ENCODE measurements at regions of chr1 and their contacts with region 1.

Region 1: DNA sequence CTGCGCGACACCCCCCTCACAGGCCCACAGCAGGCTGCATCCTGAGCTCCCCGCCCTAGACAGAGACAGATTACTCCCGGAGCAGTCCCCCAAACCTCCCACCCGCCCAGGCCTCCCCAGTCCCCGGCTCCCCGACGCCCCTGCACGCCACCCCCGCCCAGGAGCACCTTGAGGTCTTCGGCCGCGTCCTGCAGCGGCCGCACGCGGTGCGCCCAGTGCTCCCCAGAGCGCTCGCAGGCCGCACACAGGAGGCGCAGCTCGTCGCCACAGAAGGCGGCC is 709 bp downstream of the TRIM11 start:
- DNase-seq: no peak
- ATAC-seq: peak; percentile 2
- H3K4me3 Mint-ChIP-seq: peak overlapping the region; percentile 92
- H3K27ac Mint-ChIP-seq: peak overlapping the region; percentile 93
- H3K4me1 Mint-ChIP-seq: peaks cover 46% of the 10 kb centered on the region
- H3K27me3 Mint-ChIP-seq: no peaks in the 10 kb centered on the region

Region 2: DNA sequence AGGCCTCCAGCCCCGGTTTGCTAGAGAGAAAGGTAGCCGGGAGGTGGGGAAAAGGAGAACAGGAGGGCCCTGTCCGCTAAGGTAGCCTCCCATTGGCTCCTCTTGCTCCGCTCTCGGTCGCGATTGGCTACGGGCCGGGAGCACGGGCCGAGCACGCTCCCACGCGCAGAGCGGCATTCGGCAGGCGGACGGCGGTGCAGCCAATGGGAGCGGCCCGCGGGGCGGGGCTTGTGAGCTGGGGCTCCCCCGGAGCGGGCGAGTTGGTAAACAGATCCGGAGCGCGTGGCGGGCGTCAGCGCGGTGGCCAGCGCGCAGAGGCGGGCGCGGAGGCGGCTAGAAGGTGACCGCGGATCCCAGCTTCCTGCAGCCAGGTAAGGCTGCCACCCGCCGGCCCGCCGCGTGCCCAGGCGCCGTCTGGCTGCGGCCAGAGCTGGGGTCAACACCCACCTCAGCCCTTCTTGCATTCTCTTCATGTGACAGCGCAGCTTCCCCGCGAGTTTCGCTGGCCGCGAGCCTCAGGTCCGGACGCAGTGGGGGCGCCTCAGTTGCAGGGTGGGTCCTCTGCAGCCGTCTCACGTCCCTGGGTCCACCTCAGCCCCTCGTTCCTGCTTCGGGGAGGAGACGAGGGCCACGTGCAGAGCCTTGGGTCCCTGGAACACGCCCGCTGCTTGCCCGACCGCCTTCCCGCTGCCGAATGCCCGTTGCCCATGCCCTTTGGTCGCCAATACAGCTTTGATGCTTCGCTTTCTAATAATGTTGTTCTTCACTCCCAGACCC is 1465.7 kb before region 1 on chr1 and contains the start of gene COQ8A:
- CTCF ChIA-PET with region 1: no interaction called
- POLR2A ChIA-PET with region 1: no interaction called
- intact Hi-C with region 1: loop called in 1 of 2 experiments (anchors 10 kb)
- DNase-seq: peak; percentile 100
- ATAC-seq: peak; percentile 97
- H3K4me3 Mint-ChIP-seq: peak within 1 kb of the TSS; percentile 82
- H3K27ac Mint-ChIP-seq: peak within 1 kb of the TSS; percentile 96
- H3K4me1 Mint-ChIP-seq: peaks cover 53% of the 10 kb centered on the region
- H3K27me3 Mint-ChIP-seq: no peaks in the 10 kb centered on the region
- total RNA-seq, gene COQ8A: 21.3 to 26.9 TPM

Region 3: DNA sequence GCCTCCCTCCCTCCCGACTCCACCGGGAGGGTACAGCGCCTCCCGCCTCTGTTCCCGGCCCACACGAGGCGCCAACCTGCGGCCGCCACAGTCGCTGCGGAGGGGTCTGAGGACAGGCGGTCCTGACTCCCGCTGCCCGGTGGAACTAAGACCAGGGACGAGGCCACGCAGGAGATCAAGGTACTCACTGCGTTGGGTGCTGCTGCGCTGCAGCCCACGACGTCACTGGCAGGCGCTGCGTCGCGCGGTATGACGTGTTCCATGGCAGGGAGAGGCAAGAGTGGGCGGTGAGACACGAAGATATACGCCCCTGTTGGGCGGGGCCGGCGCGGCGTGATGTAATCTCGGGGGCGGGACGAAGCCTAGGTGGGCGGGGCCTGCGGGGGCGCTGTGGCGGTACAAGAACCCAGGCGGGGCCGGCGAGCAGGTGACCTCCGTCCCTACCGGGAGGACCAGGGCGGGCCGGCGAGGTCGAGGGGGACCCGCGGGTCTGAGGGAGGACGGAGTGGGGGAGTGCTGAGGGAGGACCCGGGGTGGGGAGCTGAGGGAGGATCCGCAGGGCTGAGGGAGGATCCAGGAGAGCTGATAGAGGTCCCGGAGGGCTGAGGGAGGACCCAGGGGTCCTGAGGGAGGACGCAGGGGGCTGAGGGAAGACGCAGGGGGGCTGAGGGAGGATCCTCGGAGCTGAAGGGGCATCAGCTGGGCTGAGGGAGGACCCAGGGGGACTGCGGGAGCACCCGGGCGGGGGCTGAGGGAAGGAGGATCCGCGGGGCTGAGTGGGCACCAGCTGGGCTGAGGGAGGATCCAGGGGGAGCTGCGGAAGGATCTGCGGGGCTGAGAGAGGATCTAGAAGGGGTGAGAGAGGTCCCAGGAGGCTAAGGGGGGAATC is 296.6 kb before region 1 on chr1 and contains the start of gene MRPL55:
- CTCF ChIA-PET with region 1: no interaction called
- POLR2A ChIA-PET with region 1: no interaction called
- intact Hi-C with region 1: loop called in 1 of 2 experiments (anchors 1 kb)
- DNase-seq: peak; percentile 99
- ATAC-seq: peak; percentile 92
- H3K4me3 Mint-ChIP-seq: peak within 1 kb of the TSS; percentile 90
- H3K27ac Mint-ChIP-seq: peak within 1 kb of the TSS; percentile 92
- H3K4me1 Mint-ChIP-seq: peaks cover 21% of the 10 kb centered on the region
- H3K27me3 Mint-ChIP-seq: no peaks in the 10 kb centered on the region
- total RNA-seq, gene MRPL55: 51.0 to 57.7 TPM

Region 4: GRCh38 chr1:228174482-228175375 is 231.2 kb before region 1 on chr1:
- CTCF ChIA-PET with region 1: no interaction called
- POLR2A ChIA-PET with region 1: no interaction called
- intact Hi-C with region 1: loop called in 1 of 2 experiments (anchors 2 kb)
- DNase-seq: peak; percentile 59
- ATAC-seq: peak; percentile 67
- H3K4me3 Mint-ChIP-seq: no peak overlapping the region
- H3K27ac Mint-ChIP-seq: no peak overlapping the region
- H3K4me1 Mint-ChIP-seq: no peaks in the 10 kb centered on the region
- H3K27me3 Mint-ChIP-seq: no peaks in the 10 kb centered on the region

Region 5: GRCh38 chr1:228336308-228337090 is 69.4 kb before region 1 on chr1:
- CTCF ChIA-PET with region 1: no interaction called
- POLR2A ChIA-PET with region 1: no interaction called
- intact Hi-C with region 1: no loop called
- DNase-seq: no peak
- ATAC-seq: no peak
- H3K4me3 Mint-ChIP-seq: no peak overlapping the region
- H3K27ac Mint-ChIP-seq: no peak overlapping the region
- H3K4me1 Mint-ChIP-seq: no peaks in the 10 kb centered on the region
- H3K27me3 Mint-ChIP-seq: no peaks in the 10 kb centered on the region

Region 6: DNA sequence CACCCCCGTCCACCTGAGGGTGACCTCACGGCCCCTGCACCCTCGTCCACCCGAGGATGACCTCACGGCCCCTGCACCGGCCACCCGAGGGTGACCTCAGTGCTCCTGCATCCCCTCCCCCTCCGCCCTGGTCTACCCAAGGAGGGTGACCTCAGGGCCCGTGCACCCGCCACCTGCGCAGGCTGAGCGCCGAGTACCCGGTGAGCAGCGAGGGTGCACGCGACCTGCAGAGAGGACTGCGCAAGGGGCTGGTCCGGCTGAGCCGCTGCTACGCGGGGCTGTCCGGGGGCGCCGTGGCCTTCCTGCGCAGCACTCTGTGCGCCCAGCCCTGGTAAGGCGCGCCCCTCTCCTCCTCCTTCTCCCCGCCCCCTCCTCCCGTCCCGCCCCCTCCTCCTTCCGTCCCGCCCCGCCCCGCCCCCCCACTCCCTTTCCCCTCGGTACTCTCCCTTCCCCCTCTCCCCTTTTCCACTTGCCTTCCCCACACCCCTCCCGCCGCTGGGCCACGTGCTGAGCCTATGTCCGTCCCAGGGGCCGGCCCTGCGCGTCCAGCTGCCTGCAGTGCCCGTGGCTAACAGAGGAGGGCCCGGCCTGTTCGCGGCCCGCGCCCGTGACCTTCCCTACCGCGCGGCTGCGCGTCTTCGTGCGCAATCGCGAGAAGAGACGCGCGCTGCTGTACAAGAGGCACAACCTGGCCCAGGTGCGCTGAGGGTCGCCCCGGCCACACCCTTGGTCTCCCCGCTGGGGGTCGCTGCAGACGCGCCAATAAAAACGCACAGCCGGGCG is 27.6 kb before region 1 on chr1:
- CTCF ChIA-PET with region 1: no interaction called
- POLR2A ChIA-PET with region 1: no interaction called
- intact Hi-C with region 1: loop called in 1 of 2 experiments (anchors 2 kb)
- DNase-seq: peak; percentile 84
- ATAC-seq: peak; percentile 77
- H3K4me3 Mint-ChIP-seq: peak overlapping the region; percentile 73
- H3K27ac Mint-ChIP-seq: no peak overlapping the region
- H3K4me1 Mint-ChIP-seq: peaks cover 8% of the 10 kb centered on the region
- H3K27me3 Mint-ChIP-seq: peaks cover 10% of the 10 kb centered on the region

Region 7: DNA sequence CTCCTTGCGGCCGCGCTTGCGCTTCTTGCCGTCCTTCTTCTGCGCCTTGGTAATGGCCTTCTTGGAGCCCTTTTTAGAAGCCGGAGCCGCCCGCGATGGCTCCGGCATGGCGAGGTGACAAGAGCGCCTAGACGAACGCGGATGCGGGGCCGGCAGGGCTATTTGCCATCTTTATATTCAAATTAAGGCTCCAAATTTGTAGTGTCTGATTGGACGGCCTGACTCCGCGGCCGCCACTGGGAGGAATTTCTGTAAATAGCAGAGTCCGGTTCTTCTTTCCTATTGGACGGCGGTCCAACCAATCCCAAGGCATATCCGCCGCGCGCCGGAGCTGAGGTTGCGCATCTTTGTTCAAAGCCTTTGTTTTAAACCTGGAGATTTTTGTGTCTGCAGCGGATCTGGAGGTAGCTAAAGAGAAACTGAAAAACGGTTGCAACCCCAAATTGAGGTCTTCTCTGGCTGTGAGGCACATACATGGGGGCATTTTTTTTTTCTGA is 58.6 kb after region 1 on chr1:
- CTCF ChIA-PET with region 1: interaction called, 5 read pairs
- POLR2A ChIA-PET with region 1: interaction called, 3 read pairs
- intact Hi-C with region 1: loop called in 1 of 2 experiments (anchors 1 kb)
- DNase-seq: peak; percentile 95
- ATAC-seq: peak; percentile 83
- H3K4me3 Mint-ChIP-seq: peak overlapping the region; percentile 84
- H3K27ac Mint-ChIP-seq: peak overlapping the region; percentile 92
- H3K4me1 Mint-ChIP-seq: peaks cover 50% of the 10 kb centered on the region
- H3K27me3 Mint-ChIP-seq: peaks cover 2% of the 10 kb centered on the region